Heart left ventricle (tissue), 16 donors: ENCODE measurements at regions of chr7 and their contacts with region 1.

Region 1: GRCh38 chr7:150988230-150989226 is 2.3 kb upstream of the NOS3 start:
- DNase-seq: peak; percentile 76 to 86 (median 83)
- ATAC-seq: peak; percentile 55 to 76 (median 64)
- H3K4me3 ChIP-seq: peak overlapping the region in 4 of 12 donors; percentile 6 to 25 (median 10)
- H3K27ac ChIP-seq: peak overlapping the region in 11 of 12 donors; percentile 6 to 93 (median 81)
- H3K4me1 ChIP-seq: peaks cover 0 to 54% (median 23%) of the 10 kb centered on the region in 12 donors
- H3K27me3 ChIP-seq: peaks cover 0 to 4% (median 0%) of the 10 kb centered on the region in 9 donors
- CTCF ChIP-seq: peak; percentile 88 to 96 (median 90)
- POLR2A ChIP-seq: no peak

Region 2: GRCh38 chr7:150778738-150779301 is 209.7 kb before region 1 on chr7:
- intact Hi-C with region 1: loop called in 7 of 10 experiments (anchors 2 to 10 kb)
- DNase-seq: peak; percentile 78 to 91 (median 83)
- ATAC-seq: peak; percentile 65 to 89 (median 86)
- H3K4me3 ChIP-seq: no peak overlapping the region
- H3K27ac ChIP-seq: no peak overlapping the region
- H3K4me1 ChIP-seq: peaks cover 0 to 31% (median 0%) of the 10 kb centered on the region in 12 donors
- H3K27me3 ChIP-seq: no peaks in the 10 kb centered on the region
- CTCF ChIP-seq: peak; percentile 84 to 97 (median 91)
- POLR2A ChIP-seq: no peak

Region 3: DNA sequence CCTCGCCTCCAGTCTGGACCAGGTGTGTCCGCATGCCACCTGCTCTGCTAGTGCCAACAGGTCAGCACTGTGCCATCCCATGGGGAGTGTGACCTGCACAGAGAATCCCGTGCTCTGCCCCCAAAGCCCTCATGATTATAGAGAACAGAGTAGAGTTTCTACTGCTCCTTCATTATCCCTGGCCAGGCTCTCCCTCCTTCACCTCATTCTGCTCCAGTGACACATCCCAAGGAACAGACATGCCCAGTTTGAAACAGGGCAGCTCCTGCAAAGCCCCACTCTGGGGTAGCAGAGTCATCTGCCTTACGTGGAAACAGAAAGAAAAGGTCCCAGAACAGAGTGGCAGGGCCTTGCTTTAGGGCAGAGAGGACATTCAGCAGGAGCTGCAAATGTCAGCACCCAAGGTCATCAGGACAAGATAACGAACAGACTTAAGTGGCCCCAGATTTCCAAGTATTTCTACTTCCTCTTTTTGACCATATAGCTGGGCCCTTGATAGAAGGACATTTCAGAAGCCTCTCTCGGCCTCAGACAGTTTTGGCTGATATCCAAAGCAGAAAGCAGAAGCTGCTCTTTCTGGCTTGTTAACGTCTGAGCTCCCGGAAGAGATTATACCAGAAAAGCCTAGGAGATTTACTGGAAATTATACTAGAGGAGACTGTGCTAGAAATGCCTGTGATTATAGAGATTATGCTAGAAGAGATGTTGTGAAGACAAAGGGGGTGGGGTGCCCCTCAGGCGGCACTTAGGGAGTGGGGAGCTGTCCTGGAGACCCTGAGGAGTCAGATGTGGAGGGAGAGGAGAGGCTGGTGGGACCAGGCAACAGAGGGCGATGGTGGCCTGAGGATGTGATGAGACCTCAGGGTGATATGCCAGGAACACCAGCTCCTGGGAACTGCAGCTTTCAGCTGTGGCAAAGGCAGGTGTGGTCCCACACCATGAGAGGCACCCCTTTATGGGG is 200.9 kb before region 1 on chr7:
- intact Hi-C with region 1: loop called in 6 of 10 experiments (anchors 5 to 10 kb)
- DNase-seq: peak in 2 of 5 donors; percentile 45
- ATAC-seq: peak; percentile 36 to 58 (median 38)
- H3K4me3 ChIP-seq: peak overlapping the region in 1 of 12 donors; percentile 17
- H3K27ac ChIP-seq: peak overlapping the region; percentile 68 to 95 (median 82)
- H3K4me1 ChIP-seq: peaks cover 4 to 68% (median 49%) of the 10 kb centered on the region in 12 donors
- H3K27me3 ChIP-seq: no peaks in the 10 kb centered on the region
- CTCF ChIP-seq: peak in 4 of 12 donors; percentile 9 to 21 (median 14)
- POLR2A ChIP-seq: no peak

Region 4: GRCh38 chr7:150898475-150899011 is 90.0 kb before region 1 on chr7:
- intact Hi-C with region 1: loop called (anchors 1 to 2 kb)
- DNase-seq: peak; percentile 67 to 90 (median 80)
- ATAC-seq: peak in 3 of 4 donors; percentile 64 to 80 (median 74)
- H3K4me3 ChIP-seq: no peak overlapping the region
- H3K27ac ChIP-seq: no peak overlapping the region
- H3K4me1 ChIP-seq: peaks cover 0 to 33% (median 4%) of the 10 kb centered on the region in 12 donors
- H3K27me3 ChIP-seq: peaks cover 0 to 38% (median 4%) of the 10 kb centered on the region in 9 donors
- CTCF ChIP-seq: peak; percentile 85 to 96 (median 92)
- POLR2A ChIP-seq: no peak

Region 5: DNA sequence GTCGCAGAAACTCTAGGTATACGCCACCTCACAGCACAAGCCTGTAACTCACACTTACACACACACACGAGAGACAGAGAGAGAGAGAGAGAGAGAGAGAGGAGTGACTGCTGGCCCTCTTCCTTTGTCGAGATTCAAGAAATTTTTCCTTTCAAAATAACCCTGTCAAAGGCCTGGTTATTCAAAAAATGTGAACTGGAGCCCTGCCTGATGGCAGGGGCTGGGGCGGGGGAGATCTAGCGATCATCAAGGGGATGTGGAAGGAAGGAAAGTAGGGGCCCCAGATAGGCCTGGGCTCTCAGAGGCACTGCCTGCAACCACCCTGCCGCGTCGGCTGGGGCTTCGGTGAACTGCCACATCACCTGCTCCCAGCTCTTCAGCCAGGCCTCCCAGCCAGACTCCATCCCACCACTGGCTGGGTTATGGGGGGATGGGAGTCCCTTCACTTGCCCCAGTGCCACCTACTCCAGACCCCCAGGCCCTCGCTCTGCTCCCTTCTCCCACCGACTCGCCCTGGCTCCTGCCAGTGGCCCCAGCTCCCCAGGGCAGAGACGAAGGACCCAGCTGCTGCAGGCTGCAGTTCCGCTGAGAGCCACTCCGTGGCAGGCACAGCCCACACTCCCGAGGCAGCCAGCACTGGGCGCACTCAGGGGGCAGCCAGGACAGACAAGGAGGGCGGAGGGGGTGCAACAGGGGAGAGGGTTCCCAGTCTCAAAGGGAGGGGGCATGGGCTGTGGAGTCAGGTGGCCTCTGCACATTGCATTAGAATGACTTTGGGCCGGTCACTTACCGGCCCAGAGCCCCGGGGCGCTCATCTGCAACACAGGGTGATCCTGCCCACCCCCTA is 25.8 kb before region 1 on chr7:
- intact Hi-C with region 1: loop called in 3 of 10 experiments (anchors 2 kb)
- DNase-seq: peak; percentile 69 to 82 (median 73)
- ATAC-seq: peak; percentile 15 to 64 (median 52)
- H3K4me3 ChIP-seq: no peak overlapping the region
- H3K27ac ChIP-seq: peak overlapping the region; percentile 70 to 96 (median 88)
- H3K4me1 ChIP-seq: peaks cover 0 to 93% (median 34%) of the 10 kb centered on the region in 12 donors
- H3K27me3 ChIP-seq: peaks cover 0 to 40% (median 3%) of the 10 kb centered on the region in 9 donors
- CTCF ChIP-seq: peak; percentile 73 to 90 (median 83)
- POLR2A ChIP-seq: no peak

Region 6: DNA sequence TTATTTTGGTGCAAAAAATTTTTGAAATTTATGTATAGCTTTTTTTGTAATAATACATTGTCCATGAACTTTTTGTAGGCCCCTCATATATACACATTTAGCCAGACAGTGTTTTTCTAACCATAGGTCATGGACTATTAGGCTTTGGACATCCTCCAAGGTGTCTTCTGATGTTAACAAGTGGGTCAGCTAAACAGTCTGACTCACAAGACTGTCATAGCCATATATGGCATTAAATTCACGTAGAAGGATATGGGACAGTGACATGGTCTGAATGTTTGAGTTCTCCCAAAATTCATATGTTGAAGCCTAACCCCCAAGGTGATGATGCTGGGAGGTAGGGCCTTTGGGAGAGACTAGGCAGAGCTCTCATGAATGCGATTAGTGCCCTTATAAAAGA is 339.1 kb after region 1 on chr7:
- intact Hi-C with region 1: no loop called
- DNase-seq: no peak
- ATAC-seq: no peak
- H3K4me3 ChIP-seq: no peak overlapping the region
- H3K27ac ChIP-seq: no peak overlapping the region
- H3K4me1 ChIP-seq: no peaks in the 10 kb centered on the region
- H3K27me3 ChIP-seq: no peaks in the 10 kb centered on the region
- CTCF ChIP-seq: no peak
- POLR2A ChIP-seq: no peak